Ascending aorta (tissue), 2 donors: ENCODE measurements at regions of chr10 and their contacts with region 1.

Region 1: GRCh38 chr10:101353692-101354327 is at the start of gene BTRC:
- DNase-seq: peak; percentile 94 to 99
- H3K4me3 ChIP-seq: peak within 1 kb of the TSS; percentile 80 to 86
- H3K27ac ChIP-seq: peak within 1 kb of the TSS; percentile 83 to 84
- H3K4me1 ChIP-seq: peaks cover 0 to 13% of the 10 kb centered on the region in 2 donors
- H3K27me3 ChIP-seq: no peaks in the 10 kb centered on the region
- CTCF ChIP-seq: no peak
- total RNA-seq, gene BTRC: 0.96 TPM

Region 2: DNA sequence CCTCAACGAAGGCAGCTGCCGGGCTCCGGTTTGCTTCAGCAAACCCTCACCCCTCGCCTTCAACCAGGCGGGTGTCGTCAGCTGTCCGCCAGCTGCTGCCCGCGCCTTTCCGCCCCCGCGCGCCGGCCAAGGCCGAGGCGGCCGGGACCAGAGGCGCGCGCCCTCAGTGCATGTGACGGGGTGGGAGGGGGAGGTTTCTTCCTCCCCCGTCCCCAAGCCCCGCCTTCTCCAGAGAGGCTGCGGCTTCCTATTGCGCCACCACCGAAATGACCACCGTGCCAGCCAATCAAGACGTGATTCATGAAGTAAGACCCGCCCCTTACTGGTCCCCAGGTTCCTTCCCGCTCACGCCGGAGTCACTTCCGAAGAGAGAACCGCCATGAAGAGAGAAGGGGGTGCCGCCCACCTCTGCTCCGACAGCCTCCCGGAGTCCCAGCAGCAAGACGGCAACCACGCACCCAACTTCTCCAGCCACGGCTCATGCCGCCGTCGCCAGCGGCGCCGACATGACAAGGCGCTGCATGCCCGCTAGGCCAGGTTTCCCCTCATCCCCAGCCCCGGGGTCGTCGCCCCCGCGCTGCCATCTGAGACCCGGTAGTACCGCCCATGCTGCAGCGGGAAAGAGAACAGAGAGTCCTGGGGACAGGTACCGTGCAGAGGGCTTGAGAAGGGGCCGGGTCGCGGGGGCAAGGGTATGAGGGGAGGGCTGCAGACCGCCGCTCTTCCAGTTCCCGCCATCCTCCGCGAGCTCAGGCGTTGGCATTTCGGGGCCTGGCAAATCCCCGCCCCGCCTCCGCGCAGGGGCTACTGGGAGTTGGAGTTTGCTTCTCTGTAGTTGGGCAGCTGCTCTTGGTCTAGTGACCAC is 441.0 kb before region 1 on chr10 and contains the start of gene SLF2:
- intact Hi-C with region 1: loop called (anchors 10 kb)
- DNase-seq: peak; percentile 92 to 99
- H3K4me3 ChIP-seq: peak within 1 kb of the TSS; percentile 84 to 89
- H3K27ac ChIP-seq: peak within 1 kb of the TSS; percentile 89 to 90
- H3K4me1 ChIP-seq: peaks cover 5 to 20% of the 10 kb centered on the region in 2 donors
- H3K27me3 ChIP-seq: no peaks in the 10 kb centered on the region
- CTCF ChIP-seq: no peak
- total RNA-seq, gene SLF2: 3.1 TPM

Region 3: DNA sequence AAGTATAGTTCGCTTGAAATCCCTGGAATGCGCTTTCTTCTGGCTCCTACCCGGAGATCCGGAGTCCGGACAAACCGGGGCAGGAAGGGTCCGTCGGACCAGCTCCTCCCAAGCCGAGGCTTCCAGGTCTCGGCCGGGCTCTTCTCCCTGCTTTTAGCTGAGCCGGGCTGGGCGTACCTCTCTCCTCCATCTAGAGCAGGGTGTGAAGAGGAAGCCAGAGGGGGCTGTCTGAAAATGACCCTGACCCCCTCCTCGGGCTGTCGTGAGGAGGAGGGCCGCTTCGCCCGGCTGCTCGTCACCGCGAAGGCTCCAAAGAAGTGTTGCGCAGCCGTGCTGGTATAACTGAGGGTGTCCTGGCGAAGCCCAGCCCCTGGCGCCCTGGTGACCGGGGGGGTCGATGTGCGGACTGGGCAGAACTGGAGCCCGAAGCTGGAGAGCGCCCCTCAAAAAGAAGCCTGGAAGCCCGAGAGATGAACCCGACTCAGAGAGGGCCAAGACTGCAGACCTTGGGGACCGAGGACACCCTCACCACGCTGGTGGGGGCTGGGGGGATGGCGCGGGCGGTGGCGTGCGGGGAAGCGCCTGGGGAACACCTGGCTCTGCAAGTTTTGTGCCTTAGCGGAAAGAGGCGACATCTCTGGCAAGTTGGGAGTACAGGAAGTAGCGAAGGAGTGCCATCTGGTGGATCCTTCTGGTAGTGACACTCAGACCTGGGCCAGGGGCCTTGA is 286.3 kb before region 1 on chr10:
- intact Hi-C with region 1: loop called (anchors 2 kb)
- DNase-seq: peak in 1 of 2 donors; percentile 89
- H3K4me3 ChIP-seq: peak overlapping the region; percentile 61 to 64
- H3K27ac ChIP-seq: peak overlapping the region; percentile 74 to 82
- H3K4me1 ChIP-seq: peaks cover 12 to 31% of the 10 kb centered on the region in 2 donors
- H3K27me3 ChIP-seq: no peaks in the 10 kb centered on the region
- CTCF ChIP-seq: peak; percentile 85 to 91 (median 89)

Region 4: DNA sequence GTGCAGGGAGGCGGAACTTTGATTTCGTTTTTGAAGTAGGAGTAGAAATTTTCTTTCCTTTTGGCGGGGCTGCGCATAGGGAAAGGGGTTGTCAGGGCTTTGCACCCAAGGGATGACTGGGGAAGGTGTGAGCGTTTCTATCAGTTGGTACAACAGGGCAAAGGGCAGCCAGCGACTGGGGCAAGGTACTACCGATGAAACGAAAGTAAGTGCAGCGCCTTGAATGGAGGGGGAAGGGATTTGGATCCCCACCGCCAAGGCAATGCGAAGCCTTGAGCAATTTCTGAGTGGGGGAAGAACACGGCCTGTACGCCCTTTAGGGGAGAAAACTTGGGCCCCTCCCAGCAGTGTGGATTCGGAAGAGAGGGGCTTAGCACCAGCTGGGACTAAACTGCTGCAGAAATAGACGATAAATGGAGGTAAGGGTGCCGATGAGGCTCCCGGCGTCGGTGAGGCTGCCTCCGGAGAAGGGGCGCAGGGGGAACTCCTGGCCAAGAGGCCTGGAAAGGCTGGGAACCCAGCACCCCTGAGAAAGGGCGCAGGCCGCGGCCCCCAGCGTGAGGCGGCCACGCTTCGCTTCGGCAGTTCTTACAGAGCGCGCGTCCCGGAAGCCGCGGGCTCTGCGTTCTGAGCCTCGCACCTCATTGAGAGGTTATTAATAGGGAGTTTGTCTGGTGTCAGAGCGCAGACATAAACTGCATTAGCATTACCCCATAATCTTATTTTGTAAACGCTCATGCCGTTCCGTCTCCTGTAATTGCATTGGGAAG is 232.7 kb before region 1 on chr10:
- intact Hi-C with region 1: no loop called
- DNase-seq: no peak
- H3K4me3 ChIP-seq: peak overlapping the region; percentile 64 to 70
- H3K27ac ChIP-seq: no peak overlapping the region
- H3K4me1 ChIP-seq: peaks cover 0 to 11% of the 10 kb centered on the region in 2 donors
- H3K27me3 ChIP-seq: peaks cover 8% of the 10 kb centered on the region
- CTCF ChIP-seq: no peak

Region 5: GRCh38 chr10:101569838-101570766 is 216.3 kb after region 1 on chr10:
- intact Hi-C with region 1: loop called (anchors 5 kb)
- DNase-seq: peak in 1 of 2 donors; percentile 85
- H3K4me3 ChIP-seq: peak overlapping the region; percentile 66 to 77
- H3K27ac ChIP-seq: no peak overlapping the region
- H3K4me1 ChIP-seq: peaks cover 0 to 17% of the 10 kb centered on the region in 2 donors
- H3K27me3 ChIP-seq: peaks cover 12% of the 10 kb centered on the region
- CTCF ChIP-seq: peak; percentile 69 to 98 (median 96)

Region 6: GRCh38 chr10:101587725-101588653 is 234.2 kb after region 1 on chr10 and contains the starts of genes DPCD and POLL:
- intact Hi-C with region 1: loop called (anchors 5 kb)
- DNase-seq: peak; percentile 80 to 98
- H3K4me3 ChIP-seq: peak within 1 kb of the TSS; percentile 93 to 97
- H3K27ac ChIP-seq: peak within 1 kb of the TSS; percentile 54 to 63
- H3K4me1 ChIP-seq: peaks cover 7 to 16% of the 10 kb centered on the region in 2 donors
- H3K27me3 ChIP-seq: no peaks in the 10 kb centered on the region
- CTCF ChIP-seq: no peak
- total RNA-seq, gene DPCD: 1.3 TPM
- total RNA-seq, gene POLL: 17.1 TPM

Region 7: DNA sequence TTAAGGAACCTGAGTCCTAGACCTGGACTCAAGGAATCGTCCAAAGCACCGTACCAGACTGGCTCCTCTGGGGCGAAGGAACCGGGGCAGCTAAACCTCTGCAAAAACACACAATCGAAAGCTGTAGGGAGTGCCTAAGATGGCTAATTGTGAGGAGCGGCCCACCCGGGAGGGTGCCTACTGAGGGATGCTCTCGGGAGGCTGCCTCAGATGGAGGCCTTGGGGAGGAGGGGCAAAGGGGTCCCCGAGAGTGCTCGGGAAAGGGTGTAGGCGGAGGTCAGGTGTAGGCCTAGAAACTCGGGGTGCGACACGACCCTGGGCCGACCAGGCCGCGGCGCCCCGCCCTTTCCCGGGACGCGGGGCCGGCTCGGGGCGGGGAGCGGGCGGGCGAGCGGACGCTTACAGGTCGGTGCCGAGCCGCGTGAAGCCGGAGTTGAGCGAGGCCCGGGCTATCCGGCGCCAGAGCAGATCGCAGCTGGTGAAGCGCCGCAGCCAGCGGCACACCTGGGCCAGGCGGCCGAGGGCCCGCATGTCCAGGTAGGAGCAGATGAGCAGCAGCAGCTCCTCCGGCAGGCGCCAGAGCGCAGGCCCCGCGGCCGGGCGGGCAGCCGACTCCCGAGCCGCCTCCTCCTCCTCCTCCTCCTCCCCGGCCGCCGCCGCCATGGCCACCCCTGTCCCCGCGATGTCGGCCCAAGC is 340.3 kb after region 1 on chr10:
- intact Hi-C with region 1: no loop called
- DNase-seq: peak in 1 of 2 donors; percentile 77
- H3K4me3 ChIP-seq: peak overlapping the region; percentile 79 to 94
- H3K27ac ChIP-seq: peak overlapping the region; percentile 97 to 99
- H3K4me1 ChIP-seq: peaks cover 13 to 20% of the 10 kb centered on the region in 2 donors
- H3K27me3 ChIP-seq: no peaks in the 10 kb centered on the region
- CTCF ChIP-seq: no peak

Region 8: GRCh38 chr10:102064868-102065560 is 711.2 kb after region 1 on chr10 and contains the start of gene HPS6:
- intact Hi-C with region 1: loop called (anchors 5 kb)
- DNase-seq: peak; percentile 55 to 94
- H3K4me3 ChIP-seq: peak within 1 kb of the TSS; percentile 76 to 94
- H3K27ac ChIP-seq: peak within 1 kb of the TSS; percentile 89 to 93
- H3K4me1 ChIP-seq: peaks cover 16 to 23% of the 10 kb centered on the region in 2 donors
- H3K27me3 ChIP-seq: no peaks in the 10 kb centered on the region
- CTCF ChIP-seq: peak in 2 of 3 experiments; percentile 14 to 33
- total RNA-seq, gene HPS6: 39.9 TPM